ENCODE measurements at regions of chr6 and their contacts with region 1.

Region 1: GRCh38 chr6:111411978-111412566 is 70.9 kb downstream of the REV3L start:
- DNase-seq: no peak
- ATAC-seq: peak; percentile 77
- H3K4me3 Mint-ChIP-seq: peak overlapping the region; percentile 29
- H3K27ac Mint-ChIP-seq: peak overlapping the region; percentile 71
- H3K4me1 Mint-ChIP-seq: peaks cover 34% of the 10 kb centered on the region
- H3K27me3 Mint-ChIP-seq: no peaks in the 10 kb centered on the region
- CTCF ChIP-seq: no peak

Region 2: DNA sequence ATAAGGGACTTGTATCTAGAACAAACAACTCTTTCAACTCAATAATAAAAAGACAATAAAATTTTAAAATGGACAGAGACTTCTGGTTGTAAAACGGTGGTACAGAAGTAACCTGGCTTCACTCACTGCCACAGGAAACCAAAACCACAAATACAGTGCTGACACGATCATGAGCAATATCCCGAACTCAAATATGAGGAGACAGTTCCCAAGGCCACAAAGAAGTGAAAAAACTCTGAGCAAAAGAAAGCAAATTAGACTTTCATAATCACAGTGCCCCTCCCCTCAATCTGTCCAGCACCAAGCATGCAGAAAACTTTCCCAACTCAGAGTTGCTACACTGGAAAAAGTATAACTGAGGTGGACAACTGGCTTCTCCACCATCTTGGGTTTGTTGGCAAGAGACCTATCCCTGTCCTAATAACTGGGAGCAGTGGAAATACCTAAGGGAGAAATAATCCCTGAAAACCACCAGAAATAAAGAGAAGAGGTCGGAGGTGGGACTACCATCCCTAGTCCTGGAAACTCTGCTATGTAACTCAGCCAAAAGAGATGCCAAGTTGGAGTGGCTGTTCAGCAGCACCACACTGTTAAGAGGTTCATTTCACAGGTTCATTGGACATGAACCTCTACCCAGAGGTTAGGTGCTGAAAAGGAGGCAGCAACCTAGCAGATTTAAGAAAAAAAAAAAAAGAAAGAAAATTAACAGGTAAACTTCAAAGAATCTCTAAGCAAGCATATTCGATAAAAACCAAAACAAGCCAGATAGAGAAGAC is 15.5 kb after region 1 on chr6:
- CTCF ChIA-PET with region 1: no interaction called
- POLR2A ChIA-PET with region 1: interaction called, 3 read pairs
- intact Hi-C with region 1: loop called (anchors 2 kb)
- DNase-seq: no peak
- ATAC-seq: peak; percentile 45
- H3K4me3 Mint-ChIP-seq: peak overlapping the region; percentile 3
- H3K27ac Mint-ChIP-seq: peak overlapping the region; percentile 41
- H3K4me1 Mint-ChIP-seq: peaks cover 35% of the 10 kb centered on the region
- H3K27me3 Mint-ChIP-seq: no peaks in the 10 kb centered on the region
- CTCF ChIP-seq: no peak

Region 3: DNA sequence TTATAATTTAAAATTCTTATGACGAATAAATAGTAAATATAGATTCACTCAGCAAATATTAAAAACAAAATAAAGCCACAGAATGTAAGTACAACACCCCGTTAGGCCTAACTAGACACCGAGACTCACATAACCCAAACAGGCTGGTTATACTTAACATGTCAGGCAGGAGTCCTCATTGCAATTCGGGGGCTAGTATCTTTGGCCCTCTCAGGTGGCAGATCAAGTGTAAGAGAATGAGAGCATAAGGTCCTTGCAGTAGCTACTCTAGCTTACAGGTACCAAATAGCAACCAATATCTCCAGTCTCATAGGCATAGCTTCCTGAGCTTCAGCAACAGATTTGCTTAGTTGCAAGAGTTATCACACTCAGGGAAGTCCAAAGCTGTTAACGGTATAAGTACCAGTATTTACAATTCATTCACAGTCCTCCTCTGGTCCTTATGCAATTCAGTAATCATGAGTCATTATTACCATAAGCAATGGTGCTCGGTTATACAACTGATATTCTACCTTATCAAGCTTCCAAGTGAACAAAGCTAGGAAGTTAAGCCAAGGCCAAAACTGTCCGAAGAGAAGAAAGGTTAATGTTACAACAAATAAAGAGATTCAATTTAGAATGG is 50.8 kb after region 1 on chr6:
- CTCF ChIA-PET with region 1: no interaction called
- POLR2A ChIA-PET with region 1: no interaction called
- intact Hi-C with region 1: no loop called
- DNase-seq: no peak
- ATAC-seq: no peak
- H3K4me3 Mint-ChIP-seq: no peak overlapping the region
- H3K27ac Mint-ChIP-seq: no peak overlapping the region
- H3K4me1 Mint-ChIP-seq: peaks cover 24% of the 10 kb centered on the region
- H3K27me3 Mint-ChIP-seq: no peaks in the 10 kb centered on the region
- CTCF ChIP-seq: no peak

Region 4: GRCh38 chr6:111680015-111680712 is 268.1 kb after region 1 on chr6:
- CTCF ChIA-PET with region 1: no interaction called
- POLR2A ChIA-PET with region 1: no interaction called
- intact Hi-C with region 1: no loop called
- DNase-seq: no peak
- ATAC-seq: no peak
- H3K4me3 Mint-ChIP-seq: no peak overlapping the region
- H3K27ac Mint-ChIP-seq: no peak overlapping the region
- H3K4me1 Mint-ChIP-seq: peaks cover 2% of the 10 kb centered on the region
- H3K27me3 Mint-ChIP-seq: no peaks in the 10 kb centered on the region
- CTCF ChIP-seq: no peak